ENCODE measurements at regions of chr17 and their contacts with region 1.

Region 1: GRCh38 chr17:4903051-4903818 is at the start of gene CHRNE:
- DNase-seq: peak; percentile 64 to 84 (median 82)
- ATAC-seq: peak; percentile 51
- H3K4me3 ChIP-seq: peak within 1 kb of the TSS in 1 of 2 donors; percentile 54
- H3K27ac ChIP-seq: peak within 1 kb of the TSS; percentile 80 to 85
- H3K4me1 ChIP-seq: peaks cover 11 to 48% of the 10 kb centered on the region in 2 donors
- H3K27me3 ChIP-seq: peaks cover 0 to 21% of the 10 kb centered on the region in 2 donors
- CTCF ChIP-seq: peak; percentile 70 to 80
- polyA plus RNA-seq, gene CHRNE: 0.56 to 1.5 (median 0.83) TPM

Region 2: DNA sequence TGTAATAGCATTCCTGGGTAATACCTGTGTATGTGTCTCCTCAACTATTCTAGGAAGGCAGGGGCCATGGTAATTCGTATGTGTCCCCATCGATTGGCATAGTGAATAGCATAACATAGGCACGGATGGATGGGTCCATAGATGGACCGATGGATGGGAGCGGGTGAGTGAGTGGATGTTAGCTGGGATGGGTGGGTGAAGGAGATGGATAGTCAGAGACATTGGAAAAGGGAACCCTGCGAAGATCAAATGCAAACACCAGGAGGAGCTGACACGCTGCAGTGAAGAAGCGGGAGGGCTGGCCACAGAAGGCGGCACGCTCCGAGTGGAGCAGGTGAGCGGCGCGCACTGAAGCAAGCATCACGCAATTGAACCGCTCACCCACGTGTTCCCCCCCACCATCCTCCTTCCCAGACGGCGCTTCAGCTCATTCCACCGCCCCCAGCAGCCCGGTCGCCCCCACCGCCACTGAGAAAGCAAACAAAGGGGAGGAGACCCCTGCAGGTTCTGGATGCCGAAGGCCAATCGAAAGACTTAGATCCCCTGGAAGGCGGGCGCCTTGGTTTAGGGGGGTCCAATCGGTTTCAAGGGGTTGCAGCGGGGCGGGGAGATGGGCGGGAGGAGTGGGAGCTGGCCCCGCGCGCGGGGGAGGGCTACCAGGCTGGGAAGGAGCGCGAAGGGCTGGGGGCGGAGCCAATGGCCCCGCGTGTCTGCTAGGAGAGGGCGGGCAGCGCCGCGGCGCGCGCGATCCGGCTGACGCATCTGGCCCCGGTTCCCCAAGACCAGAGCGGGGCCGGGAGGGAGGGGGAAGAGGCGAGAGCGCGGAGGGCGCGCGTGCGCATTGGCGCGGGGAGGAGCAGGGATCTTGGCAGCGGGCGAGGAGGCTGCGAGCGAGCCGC is 193.2 kb before region 1 on chr17 and contains the start of gene ARRB2:
- intact Hi-C with region 1: loop called in 1 of 2 experiments (anchors 10 kb)
- DNase-seq: peak; percentile 99 to 100 (median 100)
- ATAC-seq: peak; percentile 90
- H3K4me3 ChIP-seq: peak within 1 kb of the TSS; percentile 61 to 88
- H3K27ac ChIP-seq: peak within 1 kb of the TSS; percentile 91 to 98
- H3K4me1 ChIP-seq: peaks cover 17 to 54% of the 10 kb centered on the region in 2 donors
- H3K27me3 ChIP-seq: no peaks in the 10 kb centered on the region
- CTCF ChIP-seq: peak; percentile 44 to 66
- polyA plus RNA-seq, gene ARRB2: 41.3 to 55.8 (median 47.0) TPM

Region 3: GRCh38 chr17:4969551-4970173 is 66.4 kb after region 1 on chr17:
- intact Hi-C with region 1: loop called in 1 of 2 experiments (anchors 10 kb)
- DNase-seq: no peak
- ATAC-seq: no peak
- H3K4me3 ChIP-seq: peak overlapping the region in 1 of 2 donors; percentile 67
- H3K27ac ChIP-seq: peak overlapping the region; percentile 93 to 94
- H3K4me1 ChIP-seq: peaks cover 17 to 61% of the 10 kb centered on the region in 2 donors
- H3K27me3 ChIP-seq: no peaks in the 10 kb centered on the region
- CTCF ChIP-seq: no peak